ENCODE measurements at regions of chr3 and their contacts with region 1.

Region 1: GRCh38 chr3:127574880-127575878 is 15.4 kb downstream of the TPRA1 start:
- DNase-seq: peak; percentile 93

Region 2: DNA sequence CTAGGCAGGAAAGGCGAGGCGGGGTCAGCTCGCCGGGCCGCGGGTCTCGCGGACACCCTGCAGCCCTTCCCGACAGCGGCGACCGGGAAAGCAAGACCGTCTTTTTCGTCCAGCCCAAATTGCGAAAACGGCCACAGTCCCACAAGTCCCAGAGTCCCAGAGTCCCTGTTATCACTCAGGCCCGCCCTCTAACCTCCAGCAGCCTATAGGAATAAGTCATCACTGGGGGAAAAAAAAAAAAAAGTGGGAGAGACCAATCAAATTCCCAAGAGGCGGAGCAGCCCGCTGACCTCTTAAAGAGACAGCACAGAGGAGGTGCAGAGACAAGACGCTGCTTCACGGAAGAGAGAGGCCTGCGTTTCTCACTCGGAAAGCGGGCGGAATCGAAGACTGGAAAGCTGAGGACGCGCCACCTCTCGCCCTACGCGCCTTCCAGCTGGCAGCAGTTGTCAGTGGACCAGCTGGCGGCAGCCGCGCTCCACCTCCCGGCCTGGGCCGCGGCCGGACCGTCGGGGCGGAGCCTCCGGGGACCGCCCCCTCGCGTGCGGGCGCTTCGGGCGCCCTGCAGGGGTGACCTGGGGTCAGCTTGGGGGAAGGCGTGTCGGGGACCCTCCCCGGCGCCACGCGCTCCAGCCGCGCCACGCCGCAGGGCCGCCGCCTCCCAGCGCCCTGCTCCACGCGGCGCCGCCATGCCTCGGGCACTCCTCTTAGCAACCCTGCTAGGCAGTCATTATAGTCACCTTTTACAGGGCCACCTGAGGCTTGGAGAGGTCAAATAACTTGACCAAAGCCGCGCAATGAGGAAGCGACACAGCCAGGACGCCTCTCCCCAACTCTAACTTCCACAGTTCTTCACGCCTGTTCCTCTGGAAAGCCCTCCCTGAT is 15.7 kb after region 1 on chr3 and contains the start of gene TPRA1:
- intact Hi-C with region 1: loop called (anchors 1 kb)
- DNase-seq: peak; percentile 93
- total RNA-seq, gene TPRA1: 17.3 TPM

Measured in cardiac septum (tissue), 1 donor.